Activated T-helper 1 cell treated with anti-CD3 and anti-CD28 coated beads, Interleukin-12 subunit alpha, Interleukin-12 subunit beta, Interleukin-2, Interleukin-4 antibody, amounts not matched to agents 30 ng/mL and 10 ng/mL and 1 ng/mL, durations not matched to agents 14 hours and 24 hours and 36 hours (primary cell): ENCODE measurements at regions of chr16 and their contacts with region 1.

Region 1: DNA sequence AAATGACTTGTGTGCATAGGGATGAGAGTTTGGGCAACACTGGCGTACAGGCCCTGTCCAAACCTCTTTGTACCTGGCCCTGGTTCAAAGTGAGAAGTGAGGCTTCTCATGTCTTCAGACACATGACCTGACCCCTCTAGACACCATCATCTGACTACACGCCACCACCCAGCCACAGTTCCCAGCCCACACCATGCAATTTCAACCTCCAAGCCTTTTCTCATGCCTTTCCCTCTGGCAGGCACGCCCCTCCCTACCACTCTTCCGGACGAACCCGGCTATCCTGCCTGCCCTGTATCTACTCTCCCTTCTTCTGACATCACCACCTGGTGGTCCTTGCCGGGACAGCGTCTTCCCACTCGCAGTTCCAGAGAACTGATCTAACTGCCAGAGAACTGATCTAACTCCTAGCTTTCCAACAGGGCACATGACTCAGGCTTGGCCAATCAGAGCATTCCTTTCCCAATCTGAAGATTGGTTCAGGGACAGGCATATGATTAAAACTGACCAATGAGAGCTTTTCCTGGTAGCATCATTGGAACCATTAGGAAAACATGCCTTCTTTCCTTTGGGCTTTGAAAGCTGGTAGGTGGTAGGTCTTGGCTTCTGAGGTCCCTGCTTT is 27.1 kb upstream of the IL21R start:
- DNase-seq: no peak
- H3K4me3 Mint-ChIP-seq: no peak overlapping the region
- H3K27ac Mint-ChIP-seq: no peak overlapping the region
- H3K4me1 Mint-ChIP-seq: peaks cover 29% of the 10 kb centered on the region
- H3K27me3 Mint-ChIP-seq: no peaks in the 10 kb centered on the region

Region 2: DNA sequence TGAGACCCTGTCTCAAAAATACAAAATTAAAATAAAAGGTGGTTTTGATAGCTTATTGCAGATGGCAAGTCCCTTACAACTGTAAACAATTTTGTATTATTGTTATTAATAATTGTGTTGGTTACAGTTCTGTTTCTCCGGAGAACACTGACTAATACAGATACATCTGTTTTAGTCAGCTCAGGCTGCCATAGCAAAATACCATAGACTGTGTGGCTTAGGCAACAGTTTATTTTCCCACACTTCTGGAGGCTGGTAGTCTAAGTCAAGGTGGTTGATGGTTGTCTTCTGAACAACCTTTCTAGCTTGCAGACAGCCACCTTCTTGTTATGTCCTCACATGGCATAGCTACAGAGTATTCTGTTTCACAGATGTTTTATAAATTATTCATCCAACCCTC is 12.8 kb after region 1 on chr16:
- intact Hi-C with region 1: loop called (anchors 1 kb)
- DNase-seq: no peak
- H3K4me3 Mint-ChIP-seq: no peak overlapping the region
- H3K27ac Mint-ChIP-seq: peak overlapping the region; percentile 76
- H3K4me1 Mint-ChIP-seq: peaks cover 46% of the 10 kb centered on the region
- H3K27me3 Mint-ChIP-seq: no peaks in the 10 kb centered on the region